OCI-LY7 (cell line): ENCODE measurements at regions of chr1 and their contacts with region 1.

Region 1: GRCh38 chr1:183281553-183282091 is 95.6 kb downstream of the LAMC2 start:
- DNase-seq: peak; percentile 70
- H3K4me3 ChIP-seq: no peak overlapping the region
- H3K27ac ChIP-seq: no peak overlapping the region
- H3K4me1 ChIP-seq: no peaks in the 10 kb centered on the region
- CTCF ChIP-seq: peak; percentile 93

Region 2: DNA sequence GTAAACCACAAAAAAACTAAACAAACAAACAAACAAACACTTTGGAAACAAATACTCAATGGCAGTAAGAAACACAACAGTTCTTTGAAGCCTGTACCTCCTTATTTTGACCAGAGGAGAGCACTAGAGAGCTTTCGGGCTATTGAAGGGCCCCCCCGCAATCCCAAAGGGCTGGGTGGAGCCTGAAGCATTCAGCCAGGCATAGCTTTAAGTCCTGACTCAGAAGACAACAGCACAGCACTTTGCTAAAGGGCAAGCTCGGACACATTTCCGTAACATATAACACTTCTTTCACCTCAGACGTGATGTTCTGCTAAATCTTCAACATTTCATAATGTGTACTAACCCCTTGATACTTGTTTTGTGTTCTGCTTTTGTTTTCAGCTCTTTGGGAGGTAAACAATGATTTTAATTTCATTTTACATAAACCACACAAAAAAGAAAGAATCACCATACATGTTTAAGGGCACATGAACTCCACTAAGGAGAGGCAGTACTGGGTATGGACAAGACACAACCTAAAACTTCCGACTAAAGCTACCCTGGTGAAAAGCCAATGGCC is 319.0 kb before region 1 on chr1:
- CTCF ChIA-PET with region 1: no interaction called
- POLR2A ChIA-PET with region 1: no interaction called
- intact Hi-C with region 1: loop called (anchors 1 kb)
- DNase-seq: peak; percentile 81
- H3K4me3 ChIP-seq: no peak overlapping the region
- H3K27ac ChIP-seq: no peak overlapping the region
- H3K4me1 ChIP-seq: peaks cover 5% of the 10 kb centered on the region
- CTCF ChIP-seq: peak; percentile 99

Region 3: GRCh38 chr1:183543619-183544204 is 262.1 kb after region 1 on chr1:
- CTCF ChIA-PET with region 1: no interaction called
- POLR2A ChIA-PET with region 1: no interaction called
- intact Hi-C with region 1: loop called (anchors 1 kb)
- DNase-seq: peak; percentile 67
- H3K4me3 ChIP-seq: no peak overlapping the region
- H3K27ac ChIP-seq: no peak overlapping the region
- H3K4me1 ChIP-seq: peaks cover 54% of the 10 kb centered on the region
- CTCF ChIP-seq: peak; percentile 87

Region 4: DNA sequence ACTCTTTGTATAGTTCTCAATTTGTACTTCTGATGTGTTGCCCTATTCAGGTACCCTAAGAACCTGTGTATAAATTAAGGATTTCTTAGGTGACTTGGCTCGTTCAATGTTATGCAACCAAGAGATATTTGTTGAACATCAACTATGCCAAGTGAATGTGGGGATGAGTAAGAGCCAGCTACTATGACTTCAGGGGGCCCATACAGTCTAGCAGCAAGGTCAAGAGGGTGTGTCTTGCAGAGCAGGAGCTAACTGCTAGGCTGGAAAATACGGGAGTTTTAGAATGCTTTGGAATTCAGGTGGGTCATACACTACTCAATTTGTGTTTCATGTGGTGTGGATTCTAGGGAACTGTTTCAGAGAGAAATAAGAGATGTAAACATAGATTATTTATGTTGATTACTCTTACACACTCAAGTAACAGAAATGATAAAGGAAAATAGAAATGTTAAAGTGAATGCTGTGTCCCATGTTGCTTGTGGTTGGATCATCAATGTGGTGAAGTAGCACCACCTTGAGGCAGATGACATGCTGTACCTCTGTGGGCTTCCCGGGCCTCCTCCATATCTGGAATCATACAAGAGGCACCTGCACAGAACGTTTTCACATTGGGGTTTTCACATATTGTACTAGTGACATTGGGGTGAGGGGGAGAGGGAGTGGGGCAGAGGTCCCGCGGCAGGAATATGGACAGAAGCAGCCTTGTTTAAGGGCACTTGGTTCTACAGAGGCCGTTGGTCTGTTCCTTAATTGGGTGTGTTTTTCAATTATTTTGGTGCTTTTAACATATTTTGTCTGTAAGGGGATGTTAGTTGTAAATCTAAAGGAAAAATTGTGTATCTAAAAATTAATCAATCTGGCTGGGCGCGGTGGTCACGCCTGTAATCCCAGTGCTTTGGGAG is 341.5 kb after region 1 on chr1:
- CTCF ChIA-PET with region 1: no interaction called
- POLR2A ChIA-PET with region 1: no interaction called
- intact Hi-C with region 1: loop called (anchors 1 kb)
- DNase-seq: peak; percentile 82
- H3K4me3 ChIP-seq: no peak overlapping the region
- H3K27ac ChIP-seq: no peak overlapping the region
- H3K4me1 ChIP-seq: peaks cover 24% of the 10 kb centered on the region
- CTCF ChIP-seq: peak; percentile 97

Region 5: DNA sequence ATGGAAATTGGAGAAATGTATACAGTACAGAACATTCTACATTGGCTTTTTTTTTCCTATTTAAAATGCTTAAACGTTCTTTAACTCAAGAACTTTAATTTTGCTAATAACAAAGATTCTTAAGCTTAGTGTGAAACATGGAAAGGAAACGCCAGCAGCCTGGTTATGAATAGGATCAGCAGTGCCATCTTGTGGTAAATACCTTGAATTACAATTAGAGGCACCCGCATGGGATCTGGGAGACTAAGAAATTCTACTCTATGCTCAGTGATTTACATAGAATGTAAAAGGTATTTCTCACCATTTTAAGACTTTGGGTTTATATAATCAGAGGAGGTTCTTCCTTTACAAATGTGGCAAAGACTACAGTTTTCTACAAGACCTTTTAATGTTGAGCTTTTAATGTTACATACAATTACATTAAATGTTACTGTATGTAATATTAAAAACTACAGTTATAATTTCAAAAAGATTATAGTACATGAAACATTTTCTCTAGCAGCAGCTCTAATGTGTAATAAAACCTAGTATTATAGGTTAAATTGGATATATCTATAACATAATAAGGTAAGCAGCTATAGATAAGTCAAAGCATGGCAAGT is 403.6 kb after region 1 on chr1:
- CTCF ChIA-PET with region 1: interaction called, 4 read pairs
- POLR2A ChIA-PET with region 1: no interaction called
- intact Hi-C with region 1: loop called (anchors 1 kb)
- DNase-seq: peak; percentile 69
- H3K4me3 ChIP-seq: no peak overlapping the region
- H3K27ac ChIP-seq: no peak overlapping the region
- H3K4me1 ChIP-seq: no peaks in the 10 kb centered on the region
- CTCF ChIP-seq: peak; percentile 96

Region 6: GRCh38 chr1:183915625-183916510 is 634.2 kb after region 1 on chr1:
- CTCF ChIA-PET with region 1: no interaction called
- POLR2A ChIA-PET with region 1: no interaction called
- intact Hi-C with region 1: loop called (anchors 5 kb)
- DNase-seq: peak; percentile 82
- H3K4me3 ChIP-seq: no peak overlapping the region
- H3K27ac ChIP-seq: no peak overlapping the region
- H3K4me1 ChIP-seq: peaks cover 19% of the 10 kb centered on the region
- CTCF ChIP-seq: peak; percentile 91